ENCODE measurements at regions of chr11 and their contacts with region 1.

Region 1: DNA sequence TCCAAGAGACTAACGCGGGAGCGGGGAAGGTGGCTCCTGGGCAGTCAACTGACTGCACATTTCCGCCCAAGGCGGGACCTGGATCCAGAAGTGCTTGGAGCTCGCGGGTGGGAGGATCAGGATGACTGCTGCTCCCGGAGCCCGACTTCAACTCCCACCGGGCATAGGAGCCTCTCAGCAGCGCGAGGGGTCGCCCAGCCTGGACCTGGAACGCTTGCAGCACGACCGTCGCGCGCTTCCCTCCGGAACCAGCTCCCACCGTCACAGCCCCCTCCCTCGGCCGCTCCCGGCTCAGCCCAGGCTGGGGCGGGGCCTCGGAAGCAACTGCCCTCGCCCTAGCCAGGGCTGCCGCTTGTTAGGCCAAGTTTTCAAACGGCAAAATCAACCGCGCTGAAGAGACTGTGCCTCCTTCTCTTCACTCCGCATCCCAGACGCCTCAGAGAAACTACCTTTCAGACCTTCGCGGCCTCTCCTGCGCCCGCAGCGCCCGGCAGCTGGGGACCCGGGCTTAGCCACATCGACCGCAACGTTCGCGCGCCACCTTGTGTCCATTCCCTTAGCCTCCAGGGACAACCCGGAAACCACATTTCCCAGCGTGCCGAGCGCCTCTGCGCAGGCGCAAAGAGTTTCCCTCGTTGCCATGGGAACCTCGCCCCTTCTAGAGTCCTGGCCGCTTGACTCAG is 14.0 kb downstream of the SSH3 start:
- DNase-seq: peak; percentile 53
- H3K4me3 ChIP-seq: peak overlapping the region; percentile 96
- CTCF ChIP-seq: peak; percentile 93

Region 2: GRCh38 chr11:67053896-67054842 is 263.2 kb before region 1 on chr11:
- CTCF ChIA-PET with region 1: interaction called, 10 read pairs
- POLR2A ChIA-PET with region 1: no interaction called
- DNase-seq: no peak
- H3K4me3 ChIP-seq: no peak overlapping the region
- CTCF ChIP-seq: peak; percentile 93

Region 3: DNA sequence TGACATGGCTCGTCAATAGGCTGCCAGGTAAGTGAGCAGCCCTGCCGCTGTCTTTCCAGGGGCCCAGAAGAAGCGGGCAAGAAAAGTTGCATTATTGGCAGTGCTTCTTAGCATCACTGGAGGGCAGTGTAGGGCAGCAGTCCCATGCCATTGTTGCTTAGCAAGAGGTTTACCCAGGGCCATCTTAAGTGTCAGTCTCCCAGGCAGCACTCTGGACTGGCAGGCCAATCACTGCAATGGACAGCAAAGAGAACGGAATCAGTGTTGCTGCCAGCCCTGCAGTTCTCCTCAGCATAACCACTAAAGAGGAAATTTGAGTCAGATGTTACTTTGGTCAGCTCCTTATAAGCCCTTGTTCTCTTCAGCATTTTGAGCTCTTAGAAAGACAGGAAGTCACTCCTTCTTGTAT is 64.5 kb before region 1 on chr11:
- CTCF ChIA-PET with region 1: interaction called, 12 read pairs
- POLR2A ChIA-PET with region 1: no interaction called
- DNase-seq: no peak
- H3K4me3 ChIP-seq: no peak overlapping the region
- CTCF ChIP-seq: peak; percentile 36

Region 4: DNA sequence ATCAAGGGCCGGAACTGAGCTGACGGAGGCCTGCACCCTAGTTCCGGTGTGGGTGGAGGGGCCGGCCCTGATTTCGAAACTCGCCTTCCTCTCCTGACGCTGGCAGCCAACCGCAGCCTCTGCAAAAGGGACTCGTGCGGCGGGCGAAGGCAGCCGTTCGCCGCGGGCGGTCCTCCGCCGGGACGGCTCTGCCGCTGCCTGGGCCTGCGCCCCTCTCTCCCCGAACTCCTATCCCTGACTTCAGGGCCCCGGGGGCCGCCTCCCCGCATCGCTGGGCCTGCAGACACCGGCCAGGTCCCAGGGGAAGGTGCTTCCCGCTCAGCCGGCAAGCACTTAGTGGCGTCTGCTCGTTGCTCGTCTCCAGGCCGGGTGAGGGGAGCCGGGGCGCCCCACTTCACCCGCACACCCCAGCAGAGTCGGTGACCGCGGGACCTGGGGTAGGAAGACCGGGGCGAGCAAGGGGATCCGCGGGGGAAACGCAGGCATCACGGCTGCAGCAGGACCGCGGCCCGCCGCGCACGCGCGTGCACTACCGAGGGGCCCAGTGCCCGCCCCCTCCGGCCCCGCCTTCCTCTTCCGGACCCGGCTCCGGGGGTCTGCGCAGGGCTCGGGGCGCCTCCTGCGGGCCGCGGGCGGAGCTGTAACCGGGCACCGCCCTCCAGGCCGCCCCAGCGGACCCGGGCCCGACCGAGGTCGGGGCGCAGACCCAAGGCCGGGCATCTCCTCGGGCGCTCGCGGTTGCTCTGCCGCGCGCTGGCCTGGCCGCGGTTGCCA is 28.7 kb before region 1 on chr11:
- CTCF ChIA-PET with region 1: interaction called, 11 read pairs
- POLR2A ChIA-PET with region 1: no interaction called
- DNase-seq: peak; percentile 59
- H3K4me3 ChIP-seq: peak overlapping the region; percentile 77
- CTCF ChIP-seq: peak; percentile 55

Region 5: GRCh38 chr11:67332081-67332691 is 14.8 kb after region 1 on chr11:
- CTCF ChIA-PET with region 1: interaction called, 12 read pairs
- POLR2A ChIA-PET with region 1: no interaction called
- DNase-seq: no peak
- H3K4me3 ChIP-seq: no peak overlapping the region
- CTCF ChIP-seq: no peak

Region 6: GRCh38 chr11:67353317-67354074 is 36.1 kb after region 1 on chr11 and contains the start of gene POLD4:
- CTCF ChIA-PET with region 1: interaction called, 82 read pairs
- POLR2A ChIA-PET with region 1: no interaction called
- DNase-seq: peak; percentile 77
- H3K4me3 ChIP-seq: peak within 1 kb of the TSS; percentile 92
- CTCF ChIP-seq: no peak